GM10248 (cell line): ENCODE measurements at regions of chr20 and their contacts with region 1.

Region 1: DNA sequence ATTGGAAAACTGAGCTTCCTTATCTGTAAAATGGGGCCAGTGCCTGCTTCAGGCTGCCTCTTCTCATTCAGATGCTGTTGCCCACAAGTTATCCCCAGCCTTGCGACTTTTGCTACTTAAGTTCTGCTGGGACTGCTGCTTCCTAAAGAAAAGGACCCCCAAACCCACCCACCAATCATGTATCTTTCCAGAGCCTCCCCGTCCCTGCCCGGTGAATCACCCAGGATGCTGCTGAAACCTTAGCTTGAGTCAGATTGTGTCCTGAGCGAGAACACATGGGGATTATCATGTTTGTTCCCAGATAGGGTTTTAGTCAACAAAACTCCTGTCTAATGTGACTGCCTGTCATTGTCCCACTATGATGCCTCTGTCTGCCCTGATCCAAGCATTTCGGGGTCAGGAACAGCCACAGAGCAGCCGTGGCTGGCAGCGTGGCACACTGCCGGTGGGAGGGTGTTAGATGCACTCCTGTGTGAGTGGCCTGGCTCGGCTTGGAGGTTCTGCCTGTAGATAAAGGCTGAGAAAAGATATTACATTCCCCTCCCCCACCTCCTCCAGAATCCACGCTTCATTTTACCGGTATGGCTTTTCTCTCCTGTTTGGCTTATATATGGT is 79.9 kb downstream of the TOX2 start:
- DNase-seq: no peak
- CTCF ChIP-seq: no peak

Region 2: DNA sequence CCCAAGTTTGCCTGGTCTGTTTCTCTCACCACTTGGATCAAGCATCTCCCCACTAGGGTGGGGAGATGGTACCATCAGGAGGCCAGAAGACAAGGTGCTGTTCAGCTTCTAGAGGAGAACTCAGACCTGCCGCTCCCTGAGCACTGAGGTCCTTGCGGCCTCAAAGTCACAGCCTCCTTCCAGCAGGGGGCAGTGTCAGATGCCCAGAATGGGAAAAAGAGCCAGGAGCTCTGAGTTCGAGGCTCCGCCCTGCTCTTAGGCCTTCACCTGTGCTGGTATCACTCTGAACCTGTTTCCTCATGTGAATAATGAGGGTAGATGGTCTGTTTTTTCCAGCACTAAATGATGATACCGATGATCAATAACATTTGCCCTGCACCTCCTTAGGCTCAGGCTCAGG is 11.2 kb before region 1 on chr20:
- CTCF ChIA-PET with region 1: interaction called, 16 read pairs
- POLR2A ChIA-PET with region 1: no interaction called
- DNase-seq: no peak
- CTCF ChIP-seq: peak; percentile 41